B cell (primary cell): ENCODE measurements at regions of chr11 and their contacts with region 1.

Region 1: GRCh38 chr11:100855466-100856067 is 168.5 kb downstream of the ARHGAP42 start:
- DNase-seq: peak; percentile 59
- ATAC-seq: no peak
- H3K4me3 ChIP-seq: no peak overlapping the region
- H3K4me3 Mint-ChIP-seq: no peak overlapping the region
- H3K27ac ChIP-seq: no peak overlapping the region
- H3K27ac Mint-ChIP-seq: no peak overlapping the region
- H3K4me1 ChIP-seq: no peaks in the 10 kb centered on the region
- H3K4me1 Mint-ChIP-seq: no peaks in the 10 kb centered on the region
- H3K27me3 ChIP-seq: no peaks in the 10 kb centered on the region
- H3K27me3 Mint-ChIP-seq: no peaks in the 10 kb centered on the region
- CTCF ChIP-seq: peak; percentile 79

Region 2: DNA sequence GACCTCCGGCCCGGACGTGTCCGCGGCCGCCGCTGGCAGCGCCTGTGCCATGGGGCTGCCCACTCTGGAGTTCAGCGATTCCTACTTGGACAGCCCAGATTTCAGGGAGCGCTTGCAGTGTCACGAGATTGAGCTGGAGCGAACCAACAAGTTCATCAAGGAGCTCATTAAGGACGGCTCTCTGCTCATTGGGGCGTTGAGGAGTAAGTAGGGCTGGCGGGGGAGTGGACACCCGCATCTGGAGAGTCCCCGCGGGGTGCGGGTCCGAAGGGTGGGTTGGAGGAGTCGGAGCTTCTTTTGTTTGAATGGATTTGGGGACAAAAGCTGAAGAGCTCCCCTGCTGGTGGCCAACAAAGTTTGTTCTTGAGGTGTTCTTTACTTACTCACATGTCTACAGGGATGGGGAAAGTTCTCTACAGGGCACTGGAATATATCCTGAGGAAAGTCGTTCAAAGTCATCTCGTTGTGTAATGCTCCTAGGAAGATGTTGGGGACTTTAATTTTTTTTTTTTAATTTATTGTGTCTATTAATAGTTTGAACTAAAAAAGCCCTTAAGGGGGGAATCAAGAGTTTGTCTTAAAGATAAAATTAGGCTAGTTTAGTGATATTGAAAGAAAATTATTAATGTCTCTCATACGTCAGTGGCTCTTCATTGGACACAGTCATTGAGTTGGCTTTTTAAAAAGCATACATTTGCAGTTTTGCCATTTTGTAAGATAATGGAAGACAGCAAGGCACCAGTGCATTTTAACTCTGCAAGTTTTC is 167.8 kb before region 1 on chr11:
- CTCF ChIA-PET with region 1: interaction called, 19 read pairs
- POLR2A ChIA-PET with region 1: no interaction called
- intact Hi-C with region 1: loop called (anchors 1 kb)
- DNase-seq: peak; percentile 77
- ATAC-seq: peak; percentile 48
- H3K4me3 ChIP-seq: peak overlapping the region; percentile 65 to 82 (median 80)
- H3K4me3 Mint-ChIP-seq: peak overlapping the region; percentile 98
- H3K27ac ChIP-seq: peak overlapping the region in 1 of 2 donors; percentile 62
- H3K27ac Mint-ChIP-seq: peak overlapping the region; percentile 93
- H3K4me1 ChIP-seq: peaks cover 36 to 47% of the 10 kb centered on the region in 2 donors
- H3K4me1 Mint-ChIP-seq: peaks cover 53% of the 10 kb centered on the region
- H3K27me3 ChIP-seq: no peaks in the 10 kb centered on the region
- H3K27me3 Mint-ChIP-seq: no peaks in the 10 kb centered on the region
- CTCF ChIP-seq: peak; percentile 76

Region 3: GRCh38 chr11:100930185-100930778 is 74.7 kb after region 1 on chr11:
- CTCF ChIA-PET with region 1: interaction called, 9 read pairs
- POLR2A ChIA-PET with region 1: no interaction called
- intact Hi-C with region 1: loop called (anchors 1 kb)
- DNase-seq: peak; percentile 51
- ATAC-seq: no peak
- H3K4me3 ChIP-seq: no peak overlapping the region
- H3K4me3 Mint-ChIP-seq: no peak overlapping the region
- H3K27ac ChIP-seq: no peak overlapping the region
- H3K27ac Mint-ChIP-seq: no peak overlapping the region
- H3K4me1 ChIP-seq: peaks cover 2 to 7% of the 10 kb centered on the region in 2 donors
- H3K4me1 Mint-ChIP-seq: peaks cover 17% of the 10 kb centered on the region
- H3K27me3 ChIP-seq: no peaks in the 10 kb centered on the region
- H3K27me3 Mint-ChIP-seq: no peaks in the 10 kb centered on the region
- CTCF ChIP-seq: peak; percentile 87

Region 4: DNA sequence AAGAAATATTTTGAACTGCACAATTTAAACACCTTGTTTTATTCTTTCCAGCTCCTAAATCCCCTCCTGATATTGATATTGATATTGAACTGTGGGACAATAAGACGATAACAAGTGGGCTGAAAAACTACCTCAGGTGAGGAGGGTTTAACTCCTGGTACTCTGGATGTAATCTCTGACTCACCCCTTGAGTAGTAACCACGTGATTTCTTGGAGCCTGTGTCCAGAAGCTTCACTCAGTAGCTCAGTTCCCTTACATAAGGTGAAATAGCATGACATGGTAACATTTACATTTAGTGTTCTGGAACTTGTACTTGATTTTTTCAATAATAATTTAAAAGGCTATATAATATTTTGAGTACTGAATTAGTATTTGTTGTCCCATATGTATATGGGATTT is 106.1 kb after region 1 on chr11:
- CTCF ChIA-PET with region 1: no interaction called
- POLR2A ChIA-PET with region 1: no interaction called
- intact Hi-C with region 1: no loop called
- DNase-seq: no peak
- ATAC-seq: no peak
- H3K4me3 ChIP-seq: no peak overlapping the region
- H3K4me3 Mint-ChIP-seq: no peak overlapping the region
- H3K27ac ChIP-seq: no peak overlapping the region
- H3K27ac Mint-ChIP-seq: no peak overlapping the region
- H3K4me1 ChIP-seq: no peaks in the 10 kb centered on the region
- H3K4me1 Mint-ChIP-seq: no peaks in the 10 kb centered on the region
- H3K27me3 ChIP-seq: no peaks in the 10 kb centered on the region
- H3K27me3 Mint-ChIP-seq: no peaks in the 10 kb centered on the region
- CTCF ChIP-seq: no peak

Region 5: DNA sequence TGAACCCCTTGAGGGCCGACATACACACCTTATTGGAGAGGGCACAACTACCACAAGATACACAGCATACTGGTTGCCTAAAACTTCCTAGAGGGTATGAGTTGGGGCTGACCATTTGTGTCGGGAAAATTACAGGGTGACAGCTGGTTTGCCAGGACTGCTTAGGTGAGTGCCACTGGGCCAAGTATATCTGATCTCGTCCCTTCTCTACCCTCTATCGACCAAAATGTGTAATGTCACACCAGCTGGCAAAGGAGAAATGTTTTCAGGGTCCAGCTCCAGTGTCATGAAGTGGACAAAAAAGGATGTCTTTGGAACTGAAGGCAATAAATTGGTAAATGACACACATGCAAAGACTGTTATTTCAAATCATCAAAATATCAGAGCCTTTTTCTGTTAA is 147.9 kb after region 1 on chr11:
- CTCF ChIA-PET with region 1: no interaction called
- POLR2A ChIA-PET with region 1: no interaction called
- intact Hi-C with region 1: no loop called
- DNase-seq: no peak
- ATAC-seq: no peak
- H3K4me3 ChIP-seq: no peak overlapping the region
- H3K4me3 Mint-ChIP-seq: no peak overlapping the region
- H3K27ac ChIP-seq: no peak overlapping the region
- H3K27ac Mint-ChIP-seq: no peak overlapping the region
- H3K4me1 ChIP-seq: peaks cover 3 to 8% of the 10 kb centered on the region in 2 donors
- H3K4me1 Mint-ChIP-seq: peaks cover 5% of the 10 kb centered on the region
- H3K27me3 ChIP-seq: no peaks in the 10 kb centered on the region
- H3K27me3 Mint-ChIP-seq: peaks cover 7% of the 10 kb centered on the region
- CTCF ChIP-seq: no peak